T-cell (primary cell): ENCODE measurements at regions of chr7 and their contacts with region 1.

Region 1: GRCh38 chr7:19713676-19714075 is 4.8 kb upstream of the POLR1F start:
- DNase-seq: peak in 27 of 35 experiments; percentile 4 to 72 (median 32)
- ATAC-seq: no peak
- H3K4me3 ChIP-seq: no peak overlapping the region
- H3K4me3 Mint-ChIP-seq: no peak overlapping the region
- H3K27ac ChIP-seq: no peak overlapping the region
- H3K27ac Mint-ChIP-seq: no peak overlapping the region
- H3K4me1 ChIP-seq: peaks cover 3 to 7% of the 10 kb centered on the region in 2 experiments
- H3K4me1 Mint-ChIP-seq: peaks cover 16 to 21% (median 16%) of the 10 kb centered on the region in 3 donors
- H3K27me3 ChIP-seq: no peaks in the 10 kb centered on the region
- H3K27me3 Mint-ChIP-seq: peaks cover 0 to 3% of the 10 kb centered on the region in 2 donors

Region 2: GRCh38 chr7:19572566-19572965 is 141.1 kb before region 1 on chr7:
- CTCF ChIA-PET with region 1: no interaction called
- POLR2A ChIA-PET with region 1: no interaction called
- DNase-seq: no peak
- ATAC-seq: no peak
- H3K4me3 ChIP-seq: no peak overlapping the region
- H3K4me3 Mint-ChIP-seq: no peak overlapping the region
- H3K27ac ChIP-seq: no peak overlapping the region
- H3K27ac Mint-ChIP-seq: no peak overlapping the region
- H3K4me1 ChIP-seq: no peaks in the 10 kb centered on the region
- H3K4me1 Mint-ChIP-seq: no peaks in the 10 kb centered on the region
- H3K27me3 ChIP-seq: no peaks in the 10 kb centered on the region
- H3K27me3 Mint-ChIP-seq: no peaks in the 10 kb centered on the region

Region 3: DNA sequence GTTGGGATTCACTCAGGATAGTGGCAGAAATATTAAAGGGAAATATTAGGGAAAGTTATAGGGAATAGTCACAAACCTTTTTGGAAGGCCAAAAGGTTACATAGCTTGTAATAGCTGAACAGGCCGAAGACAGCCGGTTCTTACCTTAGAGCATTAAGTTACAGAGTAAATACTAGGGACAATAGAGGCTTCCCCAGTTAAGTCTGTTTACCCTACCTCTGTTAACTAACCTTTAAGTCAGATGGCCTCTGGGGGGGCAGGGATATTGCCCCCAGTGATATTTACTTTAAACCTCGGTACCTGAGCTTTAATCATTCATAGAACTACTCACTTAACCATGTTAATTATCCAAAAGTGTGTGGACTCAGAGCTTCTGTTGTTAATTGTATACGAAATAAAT is 12.2 kb before region 1 on chr7:
- CTCF ChIA-PET with region 1: interaction called, 3 to 10 read pairs
- POLR2A ChIA-PET with region 1: interaction called in 1 of 2 experiments, 4 read pairs
- DNase-seq: no peak
- ATAC-seq: no peak
- H3K4me3 ChIP-seq: no peak overlapping the region
- H3K4me3 Mint-ChIP-seq: no peak overlapping the region
- H3K27ac ChIP-seq: no peak overlapping the region
- H3K27ac Mint-ChIP-seq: no peak overlapping the region
- H3K4me1 ChIP-seq: no peaks in the 10 kb centered on the region
- H3K4me1 Mint-ChIP-seq: peaks cover 18 to 28% (median 20%) of the 10 kb centered on the region in 3 donors
- H3K27me3 ChIP-seq: no peaks in the 10 kb centered on the region
- H3K27me3 Mint-ChIP-seq: no peaks in the 10 kb centered on the region

Region 4: DNA sequence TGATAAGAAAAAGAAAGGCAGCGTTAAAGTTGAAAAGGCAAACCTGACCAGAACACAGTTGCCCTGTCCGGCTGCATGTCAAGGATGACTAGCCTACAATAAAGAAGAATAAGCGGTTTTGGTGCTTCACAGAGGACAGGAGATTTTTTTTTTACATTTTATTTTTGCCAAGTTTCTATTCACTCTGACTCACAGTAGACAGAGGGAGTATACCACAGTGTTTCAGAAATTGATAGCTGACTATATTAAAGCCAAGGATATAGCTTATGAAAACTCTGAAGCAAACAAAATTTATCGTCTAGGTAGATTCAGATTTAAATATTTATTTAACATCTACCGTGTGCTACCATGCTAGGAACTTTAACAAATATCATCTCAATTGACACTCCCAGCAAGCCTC is 12.1 kb after region 1 on chr7:
- CTCF ChIA-PET with region 1: interaction called, 6 to 11 read pairs
- POLR2A ChIA-PET with region 1: interaction called in 1 of 2 experiments, 6 read pairs
- DNase-seq: no peak
- ATAC-seq: no peak
- H3K4me3 ChIP-seq: no peak overlapping the region
- H3K4me3 Mint-ChIP-seq: no peak overlapping the region
- H3K27ac ChIP-seq: no peak overlapping the region
- H3K27ac Mint-ChIP-seq: no peak overlapping the region
- H3K4me1 ChIP-seq: no peaks in the 10 kb centered on the region
- H3K4me1 Mint-ChIP-seq: no peaks in the 10 kb centered on the region
- H3K27me3 ChIP-seq: no peaks in the 10 kb centered on the region
- H3K27me3 Mint-ChIP-seq: peaks cover 13 to 30% of the 10 kb centered on the region in 2 donors

Region 5: GRCh38 chr7:19747740-19748339 is 34.2 kb after region 1 on chr7:
- CTCF ChIA-PET with region 1: interaction called, 5 to 22 read pairs
- POLR2A ChIA-PET with region 1: no interaction called
- DNase-seq: peak in 1 of 35 experiments; percentile 19
- ATAC-seq: no peak
- H3K4me3 ChIP-seq: no peak overlapping the region
- H3K4me3 Mint-ChIP-seq: no peak overlapping the region
- H3K27ac ChIP-seq: no peak overlapping the region
- H3K27ac Mint-ChIP-seq: no peak overlapping the region
- H3K4me1 ChIP-seq: no peaks in the 10 kb centered on the region
- H3K4me1 Mint-ChIP-seq: no peaks in the 10 kb centered on the region
- H3K27me3 ChIP-seq: no peaks in the 10 kb centered on the region
- H3K27me3 Mint-ChIP-seq: peaks cover 4 to 10% of the 10 kb centered on the region in 2 donors

Region 6: DNA sequence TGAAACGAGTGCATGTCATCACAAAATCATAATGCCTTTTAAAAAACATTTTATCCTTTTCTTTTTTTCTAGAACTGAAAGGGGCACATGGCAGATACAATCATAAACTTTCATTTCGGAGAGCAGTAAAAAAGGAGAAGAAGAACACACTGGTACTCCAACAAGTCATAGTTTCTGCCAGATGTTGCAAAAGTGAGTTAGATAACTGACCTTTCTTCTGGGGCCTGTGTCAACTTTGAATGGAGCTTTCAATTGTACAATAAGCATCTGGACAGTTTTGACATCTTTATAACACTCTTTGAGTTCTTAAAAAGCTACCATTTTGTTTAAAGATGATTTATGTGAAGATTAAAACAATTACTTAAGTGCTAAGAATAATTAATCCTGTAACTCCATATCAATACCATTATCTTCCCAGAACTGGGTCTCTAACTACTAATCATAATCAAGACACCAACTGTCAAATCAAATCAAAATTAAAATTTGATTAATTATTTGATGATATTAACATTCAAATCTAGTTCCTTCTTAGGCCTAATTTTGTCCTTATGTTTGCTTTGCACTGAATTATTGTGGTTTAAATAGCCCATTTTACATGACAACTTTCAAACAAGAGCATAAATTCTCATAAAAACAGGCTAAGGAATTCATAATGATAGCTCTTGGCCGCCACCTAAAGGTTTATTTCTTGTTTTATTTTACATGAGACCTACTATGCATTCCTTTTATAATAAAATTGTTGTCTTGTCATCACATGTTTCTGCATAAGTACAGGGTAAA is 597.5 kb after region 1 on chr7:
- CTCF ChIA-PET with region 1: interaction called in 1 of 2 experiments, 10 read pairs
- POLR2A ChIA-PET with region 1: no interaction called
- DNase-seq: peak in 1 of 35 experiments; percentile 28
- ATAC-seq: no peak
- H3K4me3 ChIP-seq: no peak overlapping the region
- H3K4me3 Mint-ChIP-seq: no peak overlapping the region
- H3K27ac ChIP-seq: no peak overlapping the region
- H3K27ac Mint-ChIP-seq: no peak overlapping the region
- H3K4me1 ChIP-seq: no peaks in the 10 kb centered on the region
- H3K4me1 Mint-ChIP-seq: no peaks in the 10 kb centered on the region
- H3K27me3 ChIP-seq: no peaks in the 10 kb centered on the region
- H3K27me3 Mint-ChIP-seq: no peaks in the 10 kb centered on the region

Region 7: GRCh38 chr7:20598459-20599309 is 885.0 kb after region 1 on chr7:
- CTCF ChIA-PET with region 1: interaction called, 75 to 111 read pairs
- POLR2A ChIA-PET with region 1: interaction called, 3 to 4 read pairs
- DNase-seq: peak in 2 of 35 experiments; percentile 3 to 66
- ATAC-seq: peak in 2 of 4 experiments; percentile 41 to 55
- H3K4me3 ChIP-seq: no peak overlapping the region
- H3K4me3 Mint-ChIP-seq: no peak overlapping the region
- H3K27ac ChIP-seq: no peak overlapping the region
- H3K27ac Mint-ChIP-seq: no peak overlapping the region
- H3K4me1 ChIP-seq: no peaks in the 10 kb centered on the region
- H3K4me1 Mint-ChIP-seq: peaks cover 0 to 4% (median 4%) of the 10 kb centered on the region in 3 donors
- H3K27me3 ChIP-seq: no peaks in the 10 kb centered on the region
- H3K27me3 Mint-ChIP-seq: peaks cover 13 to 15% of the 10 kb centered on the region in 2 donors